MCF 10A (cell line): ENCODE measurements at regions of chr3 and their contacts with region 1.

Region 1: DNA sequence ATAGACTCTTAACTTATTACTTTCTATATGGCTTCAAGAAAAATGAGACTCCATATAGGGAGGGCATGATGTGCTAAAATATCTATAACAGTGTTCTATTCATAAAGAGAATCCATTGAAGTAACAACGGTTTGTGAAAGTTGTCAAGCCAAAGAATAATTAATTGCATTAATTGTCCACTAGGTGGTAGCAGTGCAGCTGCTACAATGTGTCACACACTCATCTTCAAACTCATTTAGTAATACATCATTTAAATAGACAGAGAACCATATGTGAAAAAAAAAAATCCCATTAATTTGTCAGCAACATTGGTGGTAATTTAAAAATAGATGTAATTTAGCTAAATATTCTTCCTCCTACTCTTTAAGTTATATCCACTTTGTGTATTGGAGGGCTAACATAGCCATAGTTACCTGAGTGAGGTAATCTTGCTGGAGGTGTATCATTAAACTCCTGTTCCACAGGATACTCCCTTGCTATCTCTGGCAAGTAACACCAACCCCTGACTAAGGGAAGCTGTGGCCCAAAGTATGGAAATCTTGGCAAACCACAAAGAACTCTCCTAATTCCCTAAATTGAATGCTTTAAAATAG is 3.7 kb upstream of the CPA3 start:
- DNase-seq: peak; percentile 71
- H3K4me3 Mint-ChIP-seq: no peak overlapping the region
- H3K27ac Mint-ChIP-seq: no peak overlapping the region
- H3K4me1 Mint-ChIP-seq: no peaks in the 10 kb centered on the region
- H3K27me3 Mint-ChIP-seq: peaks cover 74% of the 10 kb centered on the region
- CTCF ChIP-seq: peak; percentile 66

Region 2: DNA sequence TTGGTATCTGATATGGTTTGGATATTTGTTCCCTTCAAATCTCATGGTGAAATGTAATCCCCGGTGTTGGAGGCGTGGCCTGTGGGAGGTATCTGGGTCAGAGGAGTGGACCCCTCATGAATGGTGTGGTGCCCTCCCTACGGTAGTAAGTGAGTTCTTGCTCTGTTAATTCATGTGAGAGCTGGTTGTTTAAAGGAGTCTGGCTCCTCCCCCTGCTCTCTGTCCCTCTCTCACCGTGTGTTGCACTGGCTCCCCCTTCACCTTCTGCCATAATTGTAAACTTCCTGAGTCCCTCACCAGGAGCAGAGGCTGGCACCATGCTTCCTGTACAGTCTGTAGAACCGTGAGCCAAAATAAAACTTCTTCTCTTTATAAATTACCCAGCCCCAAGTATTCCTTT is 410.6 kb before region 1 on chr3:
- CTCF ChIA-PET with region 1: no interaction called
- POLR2A ChIA-PET with region 1: no interaction called
- intact Hi-C with region 1: no loop called
- DNase-seq: no peak
- H3K4me3 Mint-ChIP-seq: no peak overlapping the region
- H3K27ac Mint-ChIP-seq: no peak overlapping the region
- H3K4me1 Mint-ChIP-seq: no peaks in the 10 kb centered on the region
- H3K27me3 Mint-ChIP-seq: peaks cover 62% of the 10 kb centered on the region
- CTCF ChIP-seq: no peak

Region 3: GRCh38 chr3:148518520-148518919 is 342.9 kb before region 1 on chr3:
- CTCF ChIA-PET with region 1: no interaction called
- POLR2A ChIA-PET with region 1: no interaction called
- intact Hi-C with region 1: no loop called
- DNase-seq: no peak
- H3K4me3 Mint-ChIP-seq: no peak overlapping the region
- H3K27ac Mint-ChIP-seq: no peak overlapping the region
- H3K4me1 Mint-ChIP-seq: no peaks in the 10 kb centered on the region
- H3K27me3 Mint-ChIP-seq: no peaks in the 10 kb centered on the region
- CTCF ChIP-seq: no peak

Region 4: DNA sequence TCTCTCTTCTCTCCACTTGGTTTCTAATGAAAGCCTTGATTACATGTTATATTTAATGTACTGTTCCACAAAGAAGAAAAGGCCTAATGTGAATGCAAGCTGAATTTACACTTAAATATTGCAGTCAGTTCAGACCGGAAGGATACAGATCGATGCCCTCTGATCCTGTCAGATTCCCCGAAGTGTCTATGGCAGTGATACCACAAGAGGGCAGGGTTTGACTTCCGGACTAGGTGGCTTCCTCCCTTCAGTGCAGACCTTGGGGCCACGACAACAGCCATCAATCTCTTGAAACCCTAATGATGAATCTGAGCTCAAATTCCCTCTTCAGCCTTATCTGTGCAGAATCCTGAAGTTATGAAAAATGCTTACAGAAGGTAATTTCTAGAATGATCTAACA is 134.1 kb before region 1 on chr3:
- CTCF ChIA-PET with region 1: interaction called, 4 read pairs
- POLR2A ChIA-PET with region 1: no interaction called
- intact Hi-C with region 1: loop called (anchors 1 kb)
- DNase-seq: peak; percentile 49
- H3K4me3 Mint-ChIP-seq: no peak overlapping the region
- H3K27ac Mint-ChIP-seq: no peak overlapping the region
- H3K4me1 Mint-ChIP-seq: no peaks in the 10 kb centered on the region
- H3K27me3 Mint-ChIP-seq: peaks cover 65% of the 10 kb centered on the region
- CTCF ChIP-seq: peak; percentile 40

Region 5: DNA sequence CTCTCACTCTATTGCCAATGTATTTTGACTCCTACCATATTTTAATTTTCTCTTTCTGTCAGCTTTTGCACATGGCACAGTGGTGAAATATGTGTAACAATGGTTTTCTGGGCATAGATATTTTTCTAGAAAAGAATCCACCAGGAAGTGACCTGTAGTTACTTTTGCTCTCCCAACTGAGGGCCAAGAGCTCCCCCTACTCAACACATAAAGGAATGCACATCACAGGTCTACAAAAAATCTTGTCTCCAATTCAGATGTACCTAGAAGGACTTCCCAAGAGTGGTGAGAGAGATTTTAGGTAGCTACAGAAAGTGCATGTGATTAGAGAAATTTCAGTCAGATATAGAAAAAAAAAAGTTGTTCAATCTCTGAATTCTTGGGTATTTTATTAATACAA is 19.3 kb after region 1 on chr3:
- CTCF ChIA-PET with region 1: interaction called, 23 read pairs
- POLR2A ChIA-PET with region 1: no interaction called
- intact Hi-C with region 1: no loop called
- DNase-seq: peak; percentile 21
- H3K4me3 Mint-ChIP-seq: no peak overlapping the region
- H3K27ac Mint-ChIP-seq: no peak overlapping the region
- H3K4me1 Mint-ChIP-seq: no peaks in the 10 kb centered on the region
- H3K27me3 Mint-ChIP-seq: peaks cover 66% of the 10 kb centered on the region
- CTCF ChIP-seq: no peak

Region 6: DNA sequence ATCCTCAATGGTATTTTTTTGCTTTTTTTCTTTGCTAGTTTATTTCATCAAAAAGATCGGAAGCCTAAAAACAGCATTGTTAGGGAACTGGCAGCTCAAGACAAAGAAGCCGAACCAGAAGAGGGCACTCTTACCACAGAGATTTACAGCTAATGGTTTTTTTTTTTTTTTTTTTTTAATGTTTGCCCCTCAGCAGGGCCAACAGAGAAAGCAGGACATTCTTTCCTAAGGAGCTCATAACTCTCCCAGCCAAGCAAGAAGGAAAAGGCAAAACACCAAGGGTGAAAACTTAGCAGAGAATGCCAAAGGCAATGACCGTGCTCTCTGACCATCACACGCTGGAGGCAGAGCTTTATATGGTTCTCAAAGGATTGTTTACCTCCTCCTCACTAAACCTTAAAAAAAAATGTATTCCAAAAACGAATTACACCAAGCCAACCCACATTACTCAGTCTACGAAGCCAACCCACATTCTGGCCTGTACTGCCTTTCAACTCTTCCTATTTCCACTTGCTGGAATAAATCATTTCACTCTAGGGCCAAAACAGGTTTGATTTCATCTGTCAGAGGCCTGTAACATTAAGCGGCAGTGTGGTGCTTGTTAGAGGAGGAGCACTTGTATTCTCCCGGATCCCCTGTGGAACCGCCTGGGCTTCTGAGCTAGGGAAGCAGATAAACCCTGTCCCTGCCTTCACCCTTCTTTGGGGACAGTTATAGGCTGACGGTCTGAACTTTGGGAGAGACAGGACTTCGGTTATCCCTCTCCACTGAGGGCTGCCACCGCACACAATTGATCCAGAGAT is 94.4 kb after region 1 on chr3:
- CTCF ChIA-PET with region 1: interaction called, 296 read pairs
- POLR2A ChIA-PET with region 1: no interaction called
- intact Hi-C with region 1: no loop called
- DNase-seq: peak; percentile 66
- H3K4me3 Mint-ChIP-seq: no peak overlapping the region
- H3K27ac Mint-ChIP-seq: no peak overlapping the region
- H3K4me1 Mint-ChIP-seq: no peaks in the 10 kb centered on the region
- H3K27me3 Mint-ChIP-seq: peaks cover 13% of the 10 kb centered on the region
- CTCF ChIP-seq: peak; percentile 54